Heart left ventricle (tissue), 16 donors: ENCODE measurements at regions of chr3 and their contacts with region 1.

Region 1: GRCh38 chr3:132029182-132029902 is 5.5 kb downstream of the CPNE4 start:
- DNase-seq: peak; percentile 71 to 82 (median 78)
- ATAC-seq: peak; percentile 71 to 92 (median 90)
- H3K4me3 ChIP-seq: no peak overlapping the region
- H3K27ac ChIP-seq: no peak overlapping the region
- H3K4me1 ChIP-seq: peaks cover 0 to 8% (median under 1%) of the 10 kb centered on the region in 12 donors
- H3K27me3 ChIP-seq: peaks cover 0 to 23% (median 17%) of the 10 kb centered on the region in 9 donors
- CTCF ChIP-seq: peak; percentile 77 to 93 (median 83)
- POLR2A ChIP-seq: no peak

Region 2: DNA sequence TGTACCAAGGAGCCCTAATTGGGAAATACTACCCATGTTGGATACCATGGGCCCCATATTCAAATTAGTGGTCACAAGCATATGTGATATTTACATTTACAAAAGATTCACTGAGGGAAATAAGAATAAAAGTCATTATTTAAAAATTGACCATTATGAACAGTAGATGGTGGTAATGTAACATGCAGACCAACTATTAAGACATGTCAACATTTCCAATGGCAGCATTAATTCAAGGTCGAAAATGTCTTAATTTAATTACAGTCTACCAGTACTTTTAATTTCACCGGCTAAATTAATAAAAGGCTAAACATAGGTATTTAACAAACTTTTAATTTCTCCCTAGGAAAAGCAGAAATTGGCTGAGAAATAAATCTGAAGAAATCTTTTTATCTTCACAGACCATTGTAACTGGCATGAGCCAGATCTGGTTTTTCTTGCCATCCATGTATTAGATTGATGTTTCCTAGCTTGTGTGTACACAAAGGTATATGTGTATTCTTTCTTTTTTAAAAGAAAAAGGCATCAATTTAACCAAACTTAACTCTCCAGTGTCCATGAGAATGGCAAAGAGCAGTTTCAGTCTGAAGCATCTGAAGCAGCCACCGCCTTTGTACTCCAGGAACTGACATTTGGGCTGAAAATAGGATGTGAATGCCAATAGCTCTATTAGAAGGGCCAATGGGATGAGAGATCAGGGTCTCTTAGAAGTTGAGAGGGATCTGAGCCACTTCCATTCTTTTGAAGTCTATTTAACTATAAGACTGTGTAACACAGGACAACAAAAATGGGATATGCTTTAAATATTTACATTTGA is 976.1 kb before region 1 on chr3:
- intact Hi-C with region 1: loop called in 9 of 10 experiments (anchors 5 to 10 kb)
- DNase-seq: no peak
- ATAC-seq: no peak
- H3K4me3 ChIP-seq: no peak overlapping the region
- H3K27ac ChIP-seq: no peak overlapping the region
- H3K4me1 ChIP-seq: no peaks in the 10 kb centered on the region
- H3K27me3 ChIP-seq: no peaks in the 10 kb centered on the region
- CTCF ChIP-seq: peak; percentile 22 to 70 (median 54)
- POLR2A ChIP-seq: no peak

Region 3: GRCh38 chr3:131526801-131527347 is 502.5 kb before region 1 on chr3:
- intact Hi-C with region 1: loop called in 2 of 10 experiments (anchors 5 to 10 kb)
- DNase-seq: peak; percentile 14 to 77 (median 45)
- ATAC-seq: peak; percentile 84 to 98 (median 87)
- H3K4me3 ChIP-seq: peak overlapping the region in 11 of 12 donors; percentile 10 to 51 (median 40)
- H3K27ac ChIP-seq: no peak overlapping the region
- H3K4me1 ChIP-seq: peaks cover 0 to 7% (median 0%) of the 10 kb centered on the region in 12 donors
- H3K27me3 ChIP-seq: peaks cover 0 to 33% (median 0%) of the 10 kb centered on the region in 9 donors
- CTCF ChIP-seq: peak in 10 of 12 donors; percentile 13 to 56 (median 33)
- POLR2A ChIP-seq: no peak

Region 4: DNA sequence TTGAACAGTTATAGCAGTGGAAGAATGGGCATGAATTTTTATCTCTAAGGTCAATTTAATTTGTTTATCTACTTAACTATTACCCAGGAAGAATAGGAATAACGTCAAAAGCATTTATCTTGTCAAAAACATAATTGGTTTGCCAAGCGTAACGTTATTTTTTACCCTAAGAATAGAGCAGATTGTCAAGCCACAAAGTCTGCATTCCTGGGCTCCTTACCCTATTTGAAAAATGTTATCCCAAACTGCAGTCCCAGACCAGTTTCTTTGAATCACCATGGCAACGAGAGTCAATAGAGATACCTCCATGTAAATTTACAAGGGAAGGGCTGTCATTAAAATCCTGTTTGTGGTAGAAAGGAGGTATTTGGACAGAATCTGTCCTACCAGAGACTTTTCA is 55.6 kb before region 1 on chr3:
- intact Hi-C with region 1: no loop called
- DNase-seq: no peak
- ATAC-seq: no peak
- H3K4me3 ChIP-seq: no peak overlapping the region
- H3K27ac ChIP-seq: no peak overlapping the region
- H3K4me1 ChIP-seq: peaks cover 0 to 22% (median 0%) of the 10 kb centered on the region in 12 donors
- H3K27me3 ChIP-seq: no peaks in the 10 kb centered on the region
- CTCF ChIP-seq: no peak
- POLR2A ChIP-seq: no peak